ENCODE measurements at regions of chr16 and their contacts with region 1.

Region 1: DNA sequence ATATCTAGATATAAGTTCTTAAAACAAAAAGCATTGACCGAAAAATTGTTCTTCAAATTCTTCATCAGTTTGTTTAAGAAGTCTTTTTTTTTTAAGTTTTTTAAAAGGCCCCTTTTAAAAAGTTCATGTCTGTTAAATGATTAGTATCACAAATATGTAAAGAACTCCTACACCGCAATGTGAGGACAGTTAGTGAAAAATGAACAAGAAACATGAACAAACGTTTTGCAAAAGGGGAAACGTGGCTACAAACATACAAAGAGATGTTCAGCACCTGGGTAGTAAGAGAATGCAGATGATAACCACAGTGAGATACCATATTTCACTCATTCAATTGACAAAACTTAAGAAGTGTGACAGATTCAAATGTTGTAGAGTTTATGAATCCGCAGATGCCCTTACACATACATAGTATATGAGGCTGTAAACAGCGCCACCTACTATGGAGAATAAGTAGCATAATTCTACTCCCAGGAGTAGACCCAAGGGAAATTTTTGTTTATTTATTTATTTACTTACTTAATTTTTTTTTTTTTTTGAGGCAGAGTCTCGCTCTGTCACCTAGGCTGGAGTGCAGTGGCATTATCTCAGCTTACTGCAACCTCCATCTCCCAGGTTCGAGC is 35.3 kb downstream of the GAN start:
- DNase-seq: no peak
- H3K4me3 Mint-ChIP-seq: no peak overlapping the region
- H3K27ac Mint-ChIP-seq: no peak overlapping the region
- H3K4me1 Mint-ChIP-seq: peaks cover 7% of the 10 kb centered on the region
- H3K27me3 Mint-ChIP-seq: no peaks in the 10 kb centered on the region

Region 2: GRCh38 chr16:81261049-81261648 is 89.0 kb before region 1 on chr16:
- intact Hi-C with region 1: loop called (anchors 5 kb)
- DNase-seq: peak; percentile 75
- H3K4me3 Mint-ChIP-seq: no peak overlapping the region
- H3K27ac Mint-ChIP-seq: no peak overlapping the region
- H3K4me1 Mint-ChIP-seq: peaks cover 2% of the 10 kb centered on the region
- H3K27me3 Mint-ChIP-seq: peaks cover 4% of the 10 kb centered on the region

Region 3: DNA sequence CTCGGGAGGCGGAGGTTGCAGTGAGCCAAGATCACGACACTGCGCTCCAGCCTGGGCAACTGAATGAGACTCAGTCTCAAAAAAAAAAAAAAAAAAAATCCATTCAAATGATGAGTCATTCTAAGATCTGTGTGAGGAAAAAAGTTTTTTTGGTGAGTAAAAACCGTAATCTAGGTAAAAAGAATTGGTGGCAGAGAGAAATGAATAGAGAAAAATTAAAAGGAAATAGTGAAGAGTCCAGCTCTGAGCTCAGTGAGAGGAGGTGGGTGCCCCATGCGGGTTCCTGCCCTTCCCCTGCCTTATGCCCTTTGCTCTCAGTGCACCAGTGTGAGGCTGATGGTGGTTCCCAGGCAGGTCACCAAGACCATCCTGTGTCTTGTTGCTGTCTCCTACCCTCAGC is 14.4 kb before region 1 on chr16:
- intact Hi-C with region 1: loop called (anchors 2 kb)
- DNase-seq: no peak
- H3K4me3 Mint-ChIP-seq: no peak overlapping the region
- H3K27ac Mint-ChIP-seq: peak overlapping the region; percentile 52
- H3K4me1 Mint-ChIP-seq: peaks cover 11% of the 10 kb centered on the region
- H3K27me3 Mint-ChIP-seq: no peaks in the 10 kb centered on the region

Measured in activated CD4-positive, alpha-beta T cell treated with anti-CD3 and anti-CD28 coated beads, Interleukin-2, amount 10 ng/mL, durations not matched to agents 24 days and 14 days (primary cell).